A549 (cell line): ENCODE measurements at regions of chr7 and their contacts with region 1.

Region 1: DNA sequence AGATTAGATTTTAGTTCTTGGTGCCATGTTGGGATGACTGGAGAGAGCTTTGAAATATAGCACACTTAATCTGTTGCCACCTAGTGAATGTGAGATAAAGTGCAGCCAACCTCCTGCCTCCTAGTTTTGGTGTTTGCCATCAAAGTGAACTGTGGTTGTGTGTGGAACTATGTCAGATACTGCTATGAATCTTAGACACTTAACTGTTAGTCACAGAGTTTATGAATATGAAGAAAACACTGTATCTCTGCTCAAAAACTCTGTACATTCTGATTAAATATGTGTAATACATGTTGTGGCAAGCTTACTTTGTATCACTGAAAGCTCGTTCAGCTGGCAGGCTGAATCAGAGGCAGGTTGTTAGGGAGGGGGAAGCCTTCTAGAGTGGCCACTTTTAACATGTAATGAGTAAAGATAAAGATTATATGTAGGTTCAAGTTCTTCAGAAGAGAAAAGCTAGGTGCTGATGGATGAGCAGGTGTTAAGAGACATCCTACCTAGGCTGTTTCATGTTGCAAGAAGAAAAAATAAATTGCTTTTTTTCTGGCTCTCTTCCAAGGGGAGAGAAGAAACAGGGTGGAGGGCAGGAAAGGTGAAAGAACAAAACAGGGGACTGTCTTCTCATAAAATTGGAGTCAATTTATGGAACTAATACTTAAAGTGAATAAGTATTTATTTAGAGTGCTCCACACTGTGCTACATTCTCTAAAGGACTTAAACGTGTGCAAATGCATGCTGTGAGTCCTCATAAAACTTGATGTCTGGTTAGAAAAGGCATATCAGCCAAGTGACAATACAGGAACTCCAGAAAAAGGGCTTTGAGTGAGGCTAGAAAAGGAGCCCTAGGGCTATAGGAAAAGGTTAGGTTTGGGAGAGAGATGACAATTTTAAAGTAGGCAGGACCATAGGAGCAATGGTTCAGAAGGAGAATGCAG is 14.1 kb upstream of the LAMB1 start:
- DNase-seq: peak; percentile 40 to 69
- ATAC-seq: peak; percentile 78 to 81
- H3K4me3 ChIP-seq: no peak overlapping the region
- H3K27ac ChIP-seq: peak overlapping the region; percentile 88 to 90
- H3K4me1 ChIP-seq: peaks cover 58% of the 10 kb centered on the region
- CTCF ChIP-seq: peak; percentile 58
- EP300 ChIP-seq: no peak
- POLR2A ChIP-seq: no peak
- RAD21 ChIP-seq: peak; percentile 67 to 70

Region 2: DNA sequence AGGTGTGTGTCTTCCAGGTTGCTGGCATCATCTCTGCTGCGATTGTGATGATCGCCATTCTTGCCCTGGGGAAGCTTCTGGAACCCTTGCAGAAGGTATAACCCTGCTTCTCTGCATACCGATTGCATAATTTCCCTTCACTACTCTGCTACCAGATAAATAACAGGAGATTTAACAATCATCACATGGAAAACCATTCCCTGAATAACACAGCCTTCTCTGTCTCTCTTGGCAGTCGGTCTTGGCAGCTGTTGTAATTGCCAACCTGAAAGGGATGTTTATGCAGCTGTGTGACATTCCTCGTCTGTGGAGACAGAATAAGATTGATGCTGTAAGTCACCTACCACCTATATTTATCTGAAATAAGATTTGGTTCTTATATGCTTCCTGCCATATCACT is 322.7 kb before region 1 on chr7:
- CTCF ChIA-PET with region 1: no interaction called
- POLR2A ChIA-PET with region 1: no interaction called
- DNase-seq: no peak
- ATAC-seq: no peak
- H3K4me3 ChIP-seq: no peak overlapping the region
- H3K27ac ChIP-seq: no peak overlapping the region
- H3K4me1 ChIP-seq: no peaks in the 10 kb centered on the region
- CTCF ChIP-seq: no peak
- EP300 ChIP-seq: no peak
- POLR2A ChIP-seq: no peak
- RAD21 ChIP-seq: no peak

Region 3: DNA sequence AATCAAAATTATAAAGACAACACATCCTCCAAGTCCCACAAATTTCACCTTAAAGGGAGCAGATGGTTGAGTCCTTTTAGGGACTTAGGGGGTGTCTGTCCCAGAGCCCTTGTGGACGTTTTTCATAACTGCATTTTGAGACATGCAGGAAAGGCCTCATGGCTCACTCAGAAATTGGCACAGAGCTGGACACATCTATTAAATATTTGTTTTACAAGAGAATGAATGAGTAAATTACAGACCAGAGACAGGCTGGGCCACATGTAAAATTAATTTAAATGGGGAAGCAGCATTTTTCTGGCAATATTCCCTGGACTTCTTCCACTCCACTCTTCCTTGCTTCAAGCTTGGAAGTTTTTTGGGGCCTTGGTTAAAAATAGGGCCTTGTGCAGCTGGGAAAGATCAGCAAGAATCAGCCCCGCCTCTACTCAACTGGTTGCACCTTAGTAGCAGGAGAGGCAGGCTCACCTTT is 34.2 kb before region 1 on chr7:
- CTCF ChIA-PET with region 1: interaction called, 10 read pairs
- POLR2A ChIA-PET with region 1: no interaction called
- DNase-seq: peak; percentile 24 to 25
- ATAC-seq: peak; percentile 68 to 90; a peak in 4 of 6 replicates
- H3K4me3 ChIP-seq: no peak overlapping the region
- H3K27ac ChIP-seq: no peak overlapping the region
- H3K4me1 ChIP-seq: no peaks in the 10 kb centered on the region
- CTCF ChIP-seq: no peak
- EP300 ChIP-seq: no peak
- POLR2A ChIP-seq: no peak
- RAD21 ChIP-seq: no peak

Region 4: DNA sequence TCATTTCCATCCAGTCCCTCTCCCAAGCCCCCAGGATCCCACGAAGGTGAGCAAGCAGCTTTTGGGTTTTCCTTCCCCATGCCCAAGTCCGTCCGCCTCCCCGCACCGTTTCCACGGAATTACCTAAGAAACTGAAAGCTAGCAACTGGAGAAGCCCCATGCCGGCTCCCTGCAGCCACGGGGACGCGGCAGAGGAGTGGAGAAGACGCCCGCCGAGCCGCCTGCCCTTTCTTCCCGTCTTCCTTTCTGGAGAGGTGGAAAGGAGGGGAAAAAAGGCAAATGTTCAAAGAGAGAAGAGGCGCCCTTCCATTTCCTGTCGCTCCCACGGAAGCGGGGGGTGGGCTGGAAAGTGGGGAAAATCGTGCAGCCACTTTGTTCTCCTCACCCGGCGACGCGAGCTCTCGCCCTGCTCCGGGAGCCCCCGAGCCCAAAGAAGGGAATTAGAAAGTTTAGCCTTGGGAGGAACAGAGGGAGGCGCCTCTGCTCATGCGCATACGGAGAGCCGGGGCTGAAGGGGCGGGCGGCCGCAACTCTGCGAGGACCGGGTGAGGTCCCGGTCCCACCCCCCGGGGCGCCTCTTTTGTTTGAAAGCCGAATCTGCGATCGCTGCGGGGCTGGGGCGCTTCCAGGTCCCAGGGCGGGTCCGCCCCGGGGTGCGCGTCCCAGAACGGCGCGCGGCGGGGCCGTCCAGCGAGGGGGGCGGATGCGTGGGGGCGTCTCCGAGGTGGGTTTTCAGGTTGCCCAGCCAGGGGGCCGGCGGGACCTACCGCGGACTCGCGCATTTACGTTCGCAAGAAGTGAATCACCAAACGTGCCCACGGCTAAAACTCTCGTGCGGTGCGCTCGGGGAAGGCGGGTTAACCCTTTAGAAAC is 14.1 kb before region 1 on chr7 and contains the start of gene LAMB1:
- CTCF ChIA-PET with region 1: interaction called, 46 read pairs
- POLR2A ChIA-PET with region 1: interaction called, 29 read pairs
- DNase-seq: peak; percentile 75 to 78
- ATAC-seq: peak; percentile 64 to 77
- H3K4me3 ChIP-seq: peak within 1 kb of the TSS; percentile 60
- H3K27ac ChIP-seq: peak within 1 kb of the TSS; percentile 86 to 94
- H3K4me1 ChIP-seq: peaks cover 67% of the 10 kb centered on the region
- CTCF ChIP-seq: no peak
- EP300 ChIP-seq: peak in 1 of 2 experiments; percentile 59; a peak in 2 of 5 replicates
- POLR2A ChIP-seq: peak; percentile 69
- RAD21 ChIP-seq: peak in 1 of 2 experiments; percentile 28; a peak in 2 of 5 replicates
- polyA plus RNA-seq, gene LAMB1: 162 and 208 TPM in 2 replicates

Region 5: DNA sequence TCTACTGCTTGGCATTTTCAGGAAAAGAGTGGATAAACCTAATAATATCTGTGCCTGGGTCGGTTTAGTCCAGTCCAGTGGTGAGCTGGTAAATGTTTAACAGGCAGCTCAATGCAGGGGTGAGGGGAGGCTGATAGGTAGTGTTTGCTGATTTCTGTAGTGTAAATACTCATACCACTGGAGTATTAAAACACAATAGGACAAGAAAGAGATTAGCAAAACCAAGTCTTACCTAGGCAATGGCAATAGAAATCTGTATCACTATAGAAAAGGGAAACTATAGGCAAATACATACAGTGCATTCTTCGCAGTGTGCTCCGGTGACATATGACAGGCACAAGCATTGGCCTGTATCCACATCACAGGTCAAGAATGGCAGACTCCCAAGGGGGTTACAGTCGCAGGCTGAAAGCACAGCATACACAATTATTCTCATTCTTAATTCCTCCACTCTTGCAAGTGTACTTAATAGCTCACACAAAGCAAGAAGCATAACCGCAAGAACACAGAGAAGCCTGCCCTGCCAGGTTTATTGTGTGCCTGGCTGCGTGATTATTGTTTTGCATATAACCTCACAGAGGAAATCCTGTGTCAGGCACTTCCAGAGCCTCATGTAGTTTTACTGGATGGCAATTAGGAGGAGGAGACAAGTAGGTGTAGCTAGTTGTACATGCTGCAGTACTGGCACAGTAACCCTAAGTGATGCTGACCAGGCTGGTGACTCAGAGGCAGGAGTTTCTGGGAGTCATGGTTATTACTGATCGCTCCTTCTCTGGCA is 78.0 kb after region 1 on chr7:
- CTCF ChIA-PET with region 1: interaction called, 17 read pairs
- POLR2A ChIA-PET with region 1: interaction called, 6 read pairs
- DNase-seq: peak; percentile 50 to 79
- ATAC-seq: peak; percentile 92 to 97
- H3K4me3 ChIP-seq: peak overlapping the region; percentile 16; the same call in 2 of the 3 replicates
- H3K27ac ChIP-seq: peak overlapping the region; percentile 79 to 85
- H3K4me1 ChIP-seq: peaks cover 45% of the 10 kb centered on the region
- CTCF ChIP-seq: no peak
- EP300 ChIP-seq: no peak
- POLR2A ChIP-seq: no peak
- RAD21 ChIP-seq: 0 out of 5 replicates have a peak, but pooled peaks of 1 of the 2 experiments have one; percentile 12

Region 6: GRCh38 chr7:108146070-108146837 is 129.1 kb after region 1 on chr7:
- CTCF ChIA-PET with region 1: interaction called, 10 read pairs
- POLR2A ChIA-PET with region 1: no interaction called
- DNase-seq: peak; percentile 21 to 75
- ATAC-seq: peak; percentile 69 to 77; a peak in 4 of 6 replicates
- H3K4me3 ChIP-seq: no peak overlapping the region
- H3K27ac ChIP-seq: no peak overlapping the region
- H3K4me1 ChIP-seq: no peaks in the 10 kb centered on the region; the same call in 2 of the 3 replicates
- CTCF ChIP-seq: peak; percentile 91
- EP300 ChIP-seq: no peak
- POLR2A ChIP-seq: no peak
- RAD21 ChIP-seq: peak; percentile 94 to 95